SK-N-SH (cell line): ENCODE measurements at regions of chr2 and their contacts with region 1.

Region 1: GRCh38 chr2:127072970-127073369 is 34.0 kb downstream of the BIN1 start:
- DNase-seq: peak; percentile 94
- H3K4me3 ChIP-seq: no peak overlapping the region
- H3K27ac ChIP-seq: peak overlapping the region in 1 of 2 experiments; percentile 78; a peak in 2 of 4 replicates
- H3K4me1 ChIP-seq: peaks cover 0 to 47% of the 10 kb centered on the region in 2 experiments; a peak in 1 of 4 replicates
- H3K27me3 ChIP-seq: no peaks in the 10 kb centered on the region
- CTCF ChIP-seq: no peak
- EP300 ChIP-seq: no peak
- RAD21 ChIP-seq: peak; percentile 23; the same call in 1 of the 2 replicates

Region 2: DNA sequence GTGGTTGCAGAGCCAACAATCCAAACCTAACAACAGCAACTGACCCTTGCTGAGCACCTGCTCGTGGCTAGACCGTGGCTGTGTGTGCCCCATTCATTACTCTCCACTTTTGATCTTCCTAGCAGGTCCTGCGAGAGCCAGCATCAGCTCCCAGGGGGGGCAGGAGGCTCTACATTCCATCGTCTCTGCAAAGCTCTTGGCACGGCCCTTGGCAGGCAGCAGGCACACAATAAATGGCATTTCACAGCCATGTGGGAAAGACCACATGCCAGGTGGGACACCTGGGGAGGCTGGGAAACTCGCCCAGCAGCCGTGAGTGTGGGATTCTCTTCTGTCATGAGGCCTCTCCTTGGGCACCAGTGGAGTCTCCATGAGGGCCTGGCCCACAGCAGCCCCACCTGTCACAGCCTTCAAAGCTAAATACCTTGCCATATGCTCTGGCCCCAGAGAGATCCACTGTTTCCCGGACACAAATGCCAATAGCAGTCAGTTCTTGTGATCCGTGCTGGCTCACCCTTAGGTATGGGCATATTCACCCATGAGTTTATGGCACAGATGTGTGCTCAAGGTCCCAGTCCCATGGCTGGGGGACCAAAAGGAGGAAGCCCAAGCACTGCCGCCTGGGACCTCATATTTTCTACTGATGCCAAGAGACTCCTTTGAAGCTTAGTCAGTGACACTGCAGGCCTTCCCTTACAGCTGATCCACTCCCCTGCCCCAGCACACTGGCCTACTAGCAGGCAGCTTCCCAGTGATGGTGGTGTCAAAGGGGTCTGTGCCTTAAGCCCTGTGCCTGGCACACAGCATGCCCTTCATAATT is 181.1 kb before region 1 on chr2:
- CTCF ChIA-PET with region 1: no interaction called
- POLR2A ChIA-PET with region 1: no interaction called
- DNase-seq: no peak
- H3K4me3 ChIP-seq: no peak overlapping the region
- H3K27ac ChIP-seq: no peak overlapping the region
- H3K4me1 ChIP-seq: peaks cover 0 to 16% of the 10 kb centered on the region in 2 experiments; a peak in 1 of 4 replicates
- H3K27me3 ChIP-seq: no peaks in the 10 kb centered on the region
- CTCF ChIP-seq: no peak
- EP300 ChIP-seq: no peak
- RAD21 ChIP-seq: no peak

Region 3: GRCh38 chr2:127049927-127050802 is 22.8 kb before region 1 on chr2:
- CTCF ChIA-PET with region 1: interaction called, 18 read pairs
- POLR2A ChIA-PET with region 1: no interaction called
- DNase-seq: peak; percentile 96
- H3K4me3 ChIP-seq: no peak overlapping the region
- H3K27ac ChIP-seq: no peak overlapping the region
- H3K4me1 ChIP-seq: peaks cover 0 to 4% of the 10 kb centered on the region in 2 experiments; a peak in 1 of 4 replicates
- H3K27me3 ChIP-seq: no peaks in the 10 kb centered on the region
- CTCF ChIP-seq: peak; percentile 86
- EP300 ChIP-seq: no peak
- RAD21 ChIP-seq: peak; percentile 83

Region 4: GRCh38 chr2:127086990-127087790 is 14.2 kb after region 1 on chr2:
- CTCF ChIA-PET with region 1: interaction called, 13 read pairs
- POLR2A ChIA-PET with region 1: no interaction called
- DNase-seq: peak; percentile 89
- H3K4me3 ChIP-seq: no peak overlapping the region
- H3K27ac ChIP-seq: peak overlapping the region; percentile 26 to 76
- H3K4me1 ChIP-seq: peaks cover 12 to 51% of the 10 kb centered on the region in 2 experiments; a peak in 2 of 4 replicates
- H3K27me3 ChIP-seq: no peaks in the 10 kb centered on the region
- CTCF ChIP-seq: no peak
- EP300 ChIP-seq: peak in 1 of 2 experiments; percentile 40; a peak in 1 of 4 replicates
- RAD21 ChIP-seq: no peak

Region 5: GRCh38 chr2:127106951-127107621 is 34.1 kb after region 1 on chr2 and contains the start of gene BIN1:
- CTCF ChIA-PET with region 1: interaction called, 13 read pairs
- POLR2A ChIA-PET with region 1: interaction called, 5 read pairs
- DNase-seq: peak; percentile 92
- H3K4me3 ChIP-seq: peak within 1 kb of the TSS; percentile 76 to 87
- H3K27ac ChIP-seq: peak within 1 kb of the TSS; percentile 60 to 90
- H3K4me1 ChIP-seq: peaks cover 17 to 45% of the 10 kb centered on the region in 2 experiments
- H3K27me3 ChIP-seq: no peaks in the 10 kb centered on the region
- CTCF ChIP-seq: no peak
- EP300 ChIP-seq: no peak
- RAD21 ChIP-seq: no peak
- polyA plus RNA-seq, gene BIN1: 31.5 and 40.3 TPM in 2 replicates